ENCODE measurements at regions of chr2 and their contacts with region 1.

Region 1: DNA sequence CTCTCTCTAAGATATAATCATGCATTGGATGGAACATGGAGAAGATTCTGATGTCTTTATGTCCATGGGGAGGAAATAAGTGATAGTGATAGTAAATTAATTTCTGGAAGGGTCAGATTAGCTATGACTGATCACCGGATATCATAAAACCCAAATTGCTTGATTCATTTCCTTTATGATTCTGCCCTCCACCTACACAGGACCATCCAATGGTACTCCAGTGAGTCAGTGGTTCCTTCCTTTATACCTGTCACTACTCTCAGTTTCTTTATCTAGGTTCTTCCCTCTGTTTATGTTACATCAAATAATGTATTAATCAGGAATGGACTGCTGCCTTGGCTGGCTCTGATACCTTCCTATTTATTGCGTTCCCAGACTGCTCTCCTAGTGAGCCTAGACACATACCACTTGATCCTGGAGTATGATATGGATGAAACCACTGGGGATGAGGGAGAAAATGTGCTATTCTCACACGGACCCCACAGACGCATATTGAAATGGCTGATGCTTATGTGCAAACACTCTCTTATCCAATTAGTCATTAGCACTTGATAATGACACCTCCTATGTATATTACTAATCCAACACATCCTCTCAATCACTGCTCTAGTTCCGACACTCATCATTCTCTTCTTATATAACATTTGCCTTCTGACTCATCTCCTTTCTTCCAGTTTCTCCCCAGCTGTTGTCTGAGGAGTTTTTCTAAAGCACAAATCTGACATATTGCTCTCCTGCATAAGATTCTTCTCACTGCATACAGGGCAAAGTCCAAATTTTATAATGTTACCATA is 315.6 kb downstream of the INSIG2 start:
- DNase-seq: no peak
- H3K4me3 ChIP-seq: no peak overlapping the region
- CTCF ChIP-seq: no peak

Region 2: DNA sequence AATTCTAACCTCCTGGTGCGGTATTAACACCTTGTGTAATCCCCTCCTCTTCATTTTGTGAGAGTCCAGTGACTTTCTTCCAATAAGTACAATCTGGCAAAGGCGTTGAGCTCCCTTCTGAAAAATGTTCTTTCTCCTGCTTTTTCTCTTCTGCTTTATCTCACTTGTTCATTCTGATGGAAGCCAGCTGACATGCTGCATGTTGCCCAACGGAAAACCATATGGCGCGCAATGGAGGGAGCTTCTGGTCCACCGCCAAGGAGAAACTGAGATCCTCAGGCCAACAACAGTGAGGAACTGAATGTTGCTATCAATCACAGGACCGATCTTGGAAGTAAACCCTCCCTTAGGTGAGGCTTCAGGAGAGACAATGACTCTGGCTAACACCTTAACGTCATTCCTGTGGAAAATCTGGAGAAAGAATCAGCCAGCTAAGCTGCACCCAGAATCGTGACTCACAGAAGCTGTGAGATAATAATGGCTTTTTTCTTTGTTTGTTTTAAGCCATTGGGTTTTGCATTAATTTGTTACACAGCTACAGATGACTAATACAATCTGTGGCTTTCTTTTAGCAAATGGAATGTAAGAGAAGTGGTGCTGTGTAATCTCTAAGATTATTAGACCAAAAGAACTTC is 1913.2 kb before region 1 on chr2:
- in situ Hi-C with region 1: no loop called
- DNase-seq: peak; percentile 57
- H3K4me3 ChIP-seq: no peak overlapping the region
- CTCF ChIP-seq: no peak

Region 3: GRCh38 chr2:117536139-117536538 is 867.7 kb before region 1 on chr2:
- in situ Hi-C with region 1: no loop called
- DNase-seq: no peak
- H3K4me3 ChIP-seq: no peak overlapping the region
- CTCF ChIP-seq: peak; percentile 8

Region 4: DNA sequence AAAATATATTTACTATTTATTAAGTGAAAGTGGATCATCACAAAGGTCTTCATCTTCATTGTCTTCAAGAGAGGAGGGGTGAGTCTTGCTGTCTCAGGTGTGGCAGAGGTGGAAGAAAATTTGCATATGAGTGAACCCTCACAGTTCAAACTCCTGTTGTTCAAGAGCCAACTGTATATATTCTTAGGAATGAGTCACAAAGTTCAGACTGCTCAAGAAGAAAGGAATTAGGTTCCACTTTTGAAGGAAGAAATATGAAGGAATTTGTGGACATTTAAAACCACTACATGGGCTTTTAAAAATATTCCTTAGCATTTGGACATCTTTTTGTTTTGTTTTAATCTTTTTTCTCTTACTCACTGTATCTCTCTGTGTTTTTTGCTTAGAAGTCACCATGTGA is 103.0 kb before region 1 on chr2:
- in situ Hi-C with region 1: no loop called
- DNase-seq: no peak
- H3K4me3 ChIP-seq: no peak overlapping the region
- CTCF ChIP-seq: no peak

Region 5: GRCh38 chr2:118363604-118364003 is 40.3 kb before region 1 on chr2:
- in situ Hi-C with region 1: loop called (anchors 5 kb)
- DNase-seq: no peak
- H3K4me3 ChIP-seq: no peak overlapping the region
- CTCF ChIP-seq: no peak

Region 6: DNA sequence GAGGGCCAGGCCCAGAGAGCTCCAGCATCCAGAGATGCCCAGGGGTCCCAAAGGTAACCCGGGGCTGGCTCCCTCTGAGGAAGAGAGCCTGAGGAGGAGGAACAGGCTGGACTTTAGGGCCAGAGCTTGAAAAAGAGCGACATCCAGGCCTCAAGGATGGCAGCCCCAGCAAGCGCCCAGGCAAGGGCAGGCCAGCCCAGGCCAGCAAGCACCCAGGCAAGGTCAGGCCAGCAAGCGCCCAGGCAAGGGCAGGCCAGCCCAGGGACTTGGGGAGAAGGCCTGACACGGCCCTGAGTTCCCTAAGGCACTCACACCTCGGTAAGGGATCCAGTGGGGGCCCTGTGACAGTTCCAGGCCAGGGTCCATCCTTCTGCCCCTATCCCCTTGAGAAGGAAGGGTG is 993.3 kb after region 1 on chr2:
- in situ Hi-C with region 1: no loop called
- DNase-seq: no peak
- H3K4me3 ChIP-seq: no peak overlapping the region
- CTCF ChIP-seq: no peak

Measured in astrocyte of the cerebellum (primary cell).